ENCODE measurements at regions of chr1 and their contacts with region 1.

Region 1: GRCh38 chr1:154878371-154879022 is 8.4 kb upstream of the KCNN3 start:
- DNase-seq: peak; percentile 71
- H3K4me3 ChIP-seq: no peak overlapping the region
- H3K27ac ChIP-seq: no peak overlapping the region
- H3K4me1 ChIP-seq: no peaks in the 10 kb centered on the region
- H3K27me3 ChIP-seq: no peaks in the 10 kb centered on the region
- CTCF ChIP-seq: peak; percentile 93

Region 2: GRCh38 chr1:154614901-154615300 is 263.6 kb before region 1 on chr1:
- CTCF ChIA-PET with region 1: interaction called, 13 read pairs
- POLR2A ChIA-PET with region 1: no interaction called
- intact Hi-C with region 1: no loop called
- DNase-seq: no peak
- H3K4me3 ChIP-seq: no peak overlapping the region
- H3K27ac ChIP-seq: no peak overlapping the region
- H3K4me1 ChIP-seq: peaks cover 9% of the 10 kb centered on the region
- H3K27me3 ChIP-seq: no peaks in the 10 kb centered on the region
- CTCF ChIP-seq: no peak

Region 3: DNA sequence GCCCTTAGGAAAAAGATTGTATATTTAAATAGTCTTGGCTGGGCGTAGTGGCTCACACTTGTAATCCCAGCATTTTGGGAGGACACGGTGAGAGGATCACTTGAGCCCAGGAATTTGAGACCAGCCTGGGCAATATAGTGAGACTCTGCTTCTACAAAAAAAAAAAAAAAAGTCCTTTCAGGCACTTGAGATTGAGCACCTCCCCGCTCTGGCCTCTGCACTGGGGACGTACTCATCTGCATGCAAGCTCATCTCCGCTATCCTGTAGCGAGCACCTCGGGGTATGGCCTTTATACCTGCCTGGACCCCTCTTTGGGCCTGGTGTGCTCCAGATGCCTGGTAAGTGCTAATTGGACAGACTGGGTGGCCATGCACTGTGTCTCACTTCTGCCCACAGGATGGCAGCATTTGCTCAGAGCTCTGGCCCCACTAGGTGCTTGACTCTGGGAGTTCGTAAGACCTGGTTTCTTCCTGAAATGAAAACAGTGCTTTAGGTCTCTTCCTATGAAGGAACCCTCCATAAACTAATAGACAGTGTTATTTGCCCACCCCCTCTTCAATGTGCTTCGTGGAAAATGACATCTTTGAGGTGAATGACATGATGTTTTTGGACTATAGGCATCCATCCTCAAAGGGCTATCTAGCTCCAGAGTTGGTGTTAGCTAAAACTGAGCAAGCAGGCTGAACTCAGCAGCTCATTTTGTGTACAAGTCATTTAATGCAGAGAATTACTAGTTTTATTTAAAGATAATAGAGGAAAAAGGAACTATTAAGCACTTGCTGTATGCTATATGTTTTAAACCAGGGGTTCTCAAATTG is 208.8 kb before region 1 on chr1:
- CTCF ChIA-PET with region 1: interaction called, 14 read pairs
- POLR2A ChIA-PET with region 1: no interaction called
- intact Hi-C with region 1: loop called (anchors 1 kb)
- DNase-seq: peak; percentile 78
- H3K4me3 ChIP-seq: no peak overlapping the region
- H3K27ac ChIP-seq: no peak overlapping the region
- H3K4me1 ChIP-seq: peaks cover 9% of the 10 kb centered on the region
- H3K27me3 ChIP-seq: no peaks in the 10 kb centered on the region
- CTCF ChIP-seq: peak; percentile 84

Region 4: DNA sequence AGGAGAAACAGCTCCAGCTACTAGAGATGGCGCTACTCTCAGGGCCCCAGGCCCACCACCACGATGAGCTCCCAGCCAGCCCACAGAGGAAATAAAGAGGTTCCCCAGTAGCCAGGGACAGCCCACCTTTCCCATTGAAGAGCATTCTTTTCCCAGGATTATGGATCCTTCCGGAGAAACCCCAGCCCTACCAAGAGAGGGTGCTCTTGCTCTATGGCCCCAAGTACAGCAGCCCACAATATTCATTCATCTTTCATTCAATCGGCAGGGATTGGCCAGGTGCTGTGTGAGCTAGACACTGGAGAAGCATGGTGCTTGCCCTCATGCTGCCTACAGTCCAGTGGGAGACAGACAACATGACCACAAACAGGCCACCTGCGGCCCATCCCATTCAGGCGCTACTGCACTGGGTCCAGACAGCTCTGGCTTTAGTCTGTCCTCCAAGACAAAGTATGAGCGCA is 28.2 kb after region 1 on chr1:
- CTCF ChIA-PET with region 1: no interaction called
- POLR2A ChIA-PET with region 1: interaction called, 16 read pairs
- intact Hi-C with region 1: no loop called
- DNase-seq: no peak
- H3K4me3 ChIP-seq: no peak overlapping the region
- H3K27ac ChIP-seq: no peak overlapping the region
- H3K4me1 ChIP-seq: no peaks in the 10 kb centered on the region
- H3K27me3 ChIP-seq: no peaks in the 10 kb centered on the region
- CTCF ChIP-seq: peak; percentile 37